Heart left ventricle (tissue), 16 donors: ENCODE measurements at regions of chr18 and their contacts with region 1.

Region 1: DNA sequence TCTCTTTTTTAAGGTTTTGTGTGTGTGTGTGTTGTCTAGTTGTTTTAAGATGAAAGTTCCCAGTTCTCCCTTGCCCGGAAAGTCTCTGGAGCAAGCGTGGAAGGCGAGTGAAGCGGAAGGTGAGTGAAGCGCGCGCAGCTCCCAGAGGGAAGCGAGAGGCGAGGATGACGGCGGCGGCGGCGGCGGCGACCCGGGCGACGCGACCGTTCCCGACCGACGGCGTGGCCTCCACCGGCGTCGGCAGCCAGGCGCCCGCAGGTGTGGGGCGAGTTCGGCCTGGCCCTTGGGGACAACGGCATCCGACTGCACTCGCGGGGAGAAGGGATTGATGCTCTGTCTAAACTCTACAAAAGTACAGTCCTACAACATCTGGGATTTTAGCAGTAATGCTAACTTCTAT is 321.9 kb downstream of the CELF4 start:
- DNase-seq: no peak
- ATAC-seq: no peak
- H3K4me3 ChIP-seq: peak overlapping the region in 2 of 12 donors; percentile 11 to 19
- H3K27ac ChIP-seq: no peak overlapping the region
- H3K4me1 ChIP-seq: peaks cover 0 to 5% (median 0%) of the 10 kb centered on the region in 12 donors
- H3K27me3 ChIP-seq: peaks cover 0 to 38% (median 8%) of the 10 kb centered on the region in 9 donors
- CTCF ChIP-seq: no peak
- POLR2A ChIP-seq: no peak

Region 2: DNA sequence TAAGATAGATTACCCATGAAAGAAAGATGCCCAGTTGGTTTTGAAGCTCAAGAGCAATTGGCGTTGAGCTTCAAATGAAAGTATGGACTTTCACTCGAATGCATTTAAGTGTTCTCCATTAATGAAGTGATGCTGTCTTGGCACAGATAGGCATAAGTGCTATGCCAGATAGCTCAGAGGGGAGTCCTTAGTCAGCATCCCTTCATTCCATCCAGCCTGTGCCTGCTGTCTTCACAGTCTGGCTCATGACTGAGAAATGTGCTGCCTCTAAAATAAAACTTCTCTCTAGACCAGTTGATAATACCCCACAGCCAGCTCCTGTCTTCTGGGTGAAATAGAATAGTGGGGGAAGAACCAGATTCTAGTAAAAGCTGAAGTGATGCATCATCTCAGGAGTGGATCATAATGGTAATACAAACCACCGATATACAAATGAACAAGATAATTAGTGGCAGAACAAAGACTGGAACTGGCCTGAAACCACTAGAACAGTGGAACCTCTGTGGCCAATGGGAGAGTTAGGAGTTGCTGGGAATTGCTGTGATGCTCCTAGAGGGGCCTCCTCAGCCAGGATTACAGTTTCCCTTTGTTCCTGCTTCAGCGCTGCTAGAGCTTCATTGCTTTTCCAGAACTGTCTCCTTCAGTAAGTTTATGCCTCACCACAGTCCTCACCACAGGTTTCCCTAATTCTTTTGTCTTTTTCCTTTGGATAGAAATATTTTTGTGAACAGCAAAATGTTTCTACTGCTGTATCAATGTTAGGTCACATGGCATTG is 55.5 kb before region 1 on chr18:
- intact Hi-C with region 1: loop called in 1 of 10 experiments (anchors 10 kb)
- DNase-seq: no peak
- ATAC-seq: no peak
- H3K4me3 ChIP-seq: no peak overlapping the region
- H3K27ac ChIP-seq: no peak overlapping the region
- H3K4me1 ChIP-seq: no peaks in the 10 kb centered on the region
- H3K27me3 ChIP-seq: no peaks in the 10 kb centered on the region
- CTCF ChIP-seq: no peak
- POLR2A ChIP-seq: no peak

Region 3: GRCh38 chr18:37299471-37300304 is 55.9 kb after region 1 on chr18:
- intact Hi-C with region 1: loop called in 1 of 10 experiments (anchors 10 kb)
- DNase-seq: peak; percentile 80 to 90 (median 85)
- ATAC-seq: peak; percentile 70 to 92 (median 82)
- H3K4me3 ChIP-seq: no peak overlapping the region
- H3K27ac ChIP-seq: no peak overlapping the region
- H3K4me1 ChIP-seq: peaks cover 0 to 14% (median 7%) of the 10 kb centered on the region in 12 donors
- H3K27me3 ChIP-seq: no peaks in the 10 kb centered on the region
- CTCF ChIP-seq: no peak
- POLR2A ChIP-seq: no peak